HepG2 (cell line): ENCODE measurements at regions of chrX and their contacts with region 1.

Region 1: DNA sequence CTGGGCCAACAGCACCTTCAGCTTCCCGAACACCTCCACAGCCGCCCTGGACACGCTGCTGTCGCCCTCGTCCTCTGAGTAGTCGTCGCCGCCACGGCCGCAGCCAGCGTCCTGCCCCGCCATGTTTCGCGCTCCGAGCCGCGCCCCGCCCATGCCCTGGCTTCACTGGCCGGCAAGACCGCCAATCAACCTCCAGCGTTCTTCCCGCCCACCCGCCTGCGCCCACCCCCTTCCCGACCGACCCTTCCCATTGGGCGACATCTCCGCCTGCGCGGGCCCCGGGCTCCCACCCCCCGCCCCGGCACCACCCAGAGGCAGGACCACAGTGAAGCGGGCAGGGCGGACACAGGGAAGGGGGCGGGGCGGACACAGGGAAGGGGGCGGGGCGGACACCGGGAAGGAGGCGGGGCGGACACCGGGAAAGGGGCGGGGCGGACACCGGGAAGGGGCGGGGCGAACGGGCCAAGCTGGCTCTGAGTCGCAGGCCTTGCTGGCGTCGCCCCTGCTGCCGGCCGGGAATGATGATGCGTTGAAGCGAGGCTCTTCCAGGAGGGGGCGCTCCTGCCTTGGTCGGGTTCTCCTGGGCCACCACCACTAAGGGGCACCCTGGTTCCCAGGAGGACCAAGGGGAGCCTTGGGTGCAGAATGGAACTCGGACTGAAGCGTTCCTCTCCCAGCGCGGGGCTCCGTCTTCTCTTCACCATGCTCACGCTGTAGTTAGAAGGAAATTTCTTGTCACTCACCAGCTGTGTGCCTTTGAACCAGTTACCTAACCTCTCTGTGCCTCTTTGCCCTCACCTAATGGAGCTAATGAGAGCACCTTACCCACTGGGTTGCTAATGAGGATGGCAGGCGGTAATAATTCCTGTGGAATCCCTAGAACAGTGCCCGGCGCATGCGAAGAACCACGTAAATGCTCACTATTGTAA is at the start of gene HAUS7:
- DNase-seq: peak; percentile 73
- ATAC-seq: peak; percentile 86
- H3K4me3 ChIP-seq: peak within 1 kb of the TSS; percentile 62 to 78 (median 73); a peak in 5 of 6 replicates
- H3K27ac ChIP-seq: peak within 1 kb of the TSS; percentile 54
- H3K4me1 ChIP-seq: peaks cover 14% of the 10 kb centered on the region
- H3K27me3 ChIP-seq: no peaks in the 10 kb centered on the region; a peak in 1 of 5 replicates
- CTCF ChIP-seq: peak; percentile 95
- EP300 ChIP-seq: no peak
- POLR2A ChIP-seq: peak in 1 of 2 experiments; percentile 35; a peak in 1 of 4 replicates
- RAD21 ChIP-seq: peak; percentile 88
- total RNA-seq, gene HAUS7: 42.4 and 52.1 TPM in 2 replicates

Region 2: GRCh38 chrX:153488231-153488914 is 17.7 kb after region 1 on chrX:
- CTCF ChIA-PET with region 1: no interaction called
- POLR2A ChIA-PET with region 1: interaction called, 10 read pairs
- in situ Hi-C with region 1: no loop called
- intact Hi-C with region 1: no loop called
- DNase-seq: peak; percentile 48
- ATAC-seq: peak; percentile 40
- H3K4me3 ChIP-seq: peak overlapping the region; percentile 30 to 66 (median 50); a peak in 5 of 6 replicates
- H3K27ac ChIP-seq: peak overlapping the region; percentile 40
- H3K4me1 ChIP-seq: peaks cover 78% of the 10 kb centered on the region
- H3K27me3 ChIP-seq: peaks cover 3% of the 10 kb centered on the region in 2 experiments; a peak in 2 of 5 replicates
- CTCF ChIP-seq: no peak
- EP300 ChIP-seq: peak in 1 of 2 experiments; percentile 53; a peak in 1 of 4 replicates
- POLR2A ChIP-seq: no peak
- RAD21 ChIP-seq: no peak

Region 3: GRCh38 chrX:153494541-153495361 is 24.1 kb after region 1 on chrX and contains the start of gene BGN:
- CTCF ChIA-PET with region 1: interaction called, 10 read pairs
- POLR2A ChIA-PET with region 1: interaction called, 10 read pairs
- in situ Hi-C with region 1: no loop called
- intact Hi-C with region 1: no loop called
- DNase-seq: peak; percentile 26
- ATAC-seq: peak; percentile 69
- H3K4me3 ChIP-seq: peak within 1 kb of the TSS; percentile 7 to 58 (median 28); a peak in 4 of 6 replicates
- H3K27ac ChIP-seq: no peak within 1 kb of the TSS
- H3K4me1 ChIP-seq: peaks cover 55% of the 10 kb centered on the region
- H3K27me3 ChIP-seq: 0 out of 5 replicates have a peak, but pooled peaks cover 1 to 6% of the 10 kb centered on the region in 2 experiments
- CTCF ChIP-seq: peak; percentile 79
- EP300 ChIP-seq: no peak
- POLR2A ChIP-seq: no peak
- RAD21 ChIP-seq: peak; percentile 73
- total RNA-seq, gene BGN: 0.18 TPM in 1 of 2 replicates, not detected in the other

Region 4: DNA sequence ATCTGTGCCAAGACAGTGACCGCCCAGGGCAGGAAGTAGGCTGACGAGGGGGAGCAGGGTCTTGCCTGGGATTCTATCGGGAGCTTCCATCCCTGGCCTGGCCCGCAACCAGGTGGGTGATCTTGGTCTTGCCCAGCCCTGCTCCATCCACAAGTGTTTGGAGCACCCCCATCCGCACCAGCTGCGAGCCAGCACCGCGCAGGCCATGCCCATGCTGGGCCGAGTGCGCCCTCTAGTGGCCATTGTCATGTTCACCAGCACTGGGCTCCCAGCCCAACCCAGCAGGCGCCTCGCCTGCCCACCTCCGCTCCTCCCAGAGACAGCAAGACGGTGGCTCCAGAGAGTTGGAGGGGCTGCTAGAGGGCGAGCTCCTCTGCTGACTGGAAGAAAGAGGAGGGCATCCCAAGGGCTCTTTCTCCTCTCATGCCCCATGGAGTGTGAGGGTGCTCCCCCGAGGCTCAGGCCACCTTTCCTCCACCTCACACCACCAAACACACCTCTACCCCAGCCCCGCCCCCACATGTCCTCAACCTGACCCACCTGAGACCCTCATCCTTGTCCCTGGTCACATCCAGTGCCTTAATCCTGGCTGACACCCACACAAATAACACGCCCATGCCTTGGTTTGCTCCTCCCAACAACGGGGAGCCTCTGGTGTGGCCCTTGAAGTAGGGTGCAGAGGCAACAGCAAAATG is 36.9 kb after region 1 on chrX:
- CTCF ChIA-PET with region 1: interaction called, 17 read pairs
- POLR2A ChIA-PET with region 1: interaction called, 3 read pairs
- in situ Hi-C with region 1: loop called (anchors 5 kb)
- intact Hi-C with region 1: loop called (anchors 1 kb)
- DNase-seq: peak; percentile 27
- ATAC-seq: peak; percentile 96
- H3K4me3 ChIP-seq: no peak overlapping the region
- H3K27ac ChIP-seq: no peak overlapping the region
- H3K4me1 ChIP-seq: no peaks in the 10 kb centered on the region
- H3K27me3 ChIP-seq: no peaks in the 10 kb centered on the region
- CTCF ChIP-seq: peak; percentile 94
- EP300 ChIP-seq: no peak
- POLR2A ChIP-seq: no peak
- RAD21 ChIP-seq: peak; percentile 87